A673 (cell line): ENCODE measurements at regions of chr1 and their contacts with region 1.

Region 1: DNA sequence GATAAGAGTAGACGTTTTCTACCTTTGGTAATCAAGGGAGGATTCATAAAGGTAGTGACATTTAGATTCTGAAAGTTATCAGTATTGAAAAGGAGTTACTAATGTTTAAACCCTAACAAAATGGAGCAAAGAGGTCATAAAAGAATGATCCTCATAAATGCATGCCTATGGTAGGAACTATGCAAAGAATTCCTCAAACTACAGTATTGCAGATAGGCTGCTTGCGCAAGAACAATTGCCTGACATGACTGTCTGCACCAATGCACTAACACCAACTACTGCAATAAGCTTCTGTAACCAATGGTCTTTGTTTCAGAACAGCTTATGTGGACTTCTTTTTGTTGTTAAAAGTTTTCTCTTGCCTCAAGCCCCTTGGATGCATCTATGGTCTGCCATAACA is 597.3 kb upstream of the ADGRL4 start:
- DNase-seq: peak; percentile 26
- H3K4me3 ChIP-seq: no peak overlapping the region
- H3K27ac ChIP-seq: no peak overlapping the region
- H3K4me1 ChIP-seq: peaks cover 11% of the 10 kb centered on the region
- H3K27me3 ChIP-seq: no peaks in the 10 kb centered on the region
- CTCF ChIP-seq: no peak

Region 2: GRCh38 chr1:79507770-79508169 is 96.1 kb before region 1 on chr1:
- CTCF ChIA-PET with region 1: no interaction called
- POLR2A ChIA-PET with region 1: no interaction called
- intact Hi-C with region 1: no loop called
- DNase-seq: no peak
- H3K4me3 ChIP-seq: no peak overlapping the region
- H3K27ac ChIP-seq: no peak overlapping the region
- H3K4me1 ChIP-seq: no peaks in the 10 kb centered on the region
- H3K27me3 ChIP-seq: no peaks in the 10 kb centered on the region
- CTCF ChIP-seq: no peak

Region 3: DNA sequence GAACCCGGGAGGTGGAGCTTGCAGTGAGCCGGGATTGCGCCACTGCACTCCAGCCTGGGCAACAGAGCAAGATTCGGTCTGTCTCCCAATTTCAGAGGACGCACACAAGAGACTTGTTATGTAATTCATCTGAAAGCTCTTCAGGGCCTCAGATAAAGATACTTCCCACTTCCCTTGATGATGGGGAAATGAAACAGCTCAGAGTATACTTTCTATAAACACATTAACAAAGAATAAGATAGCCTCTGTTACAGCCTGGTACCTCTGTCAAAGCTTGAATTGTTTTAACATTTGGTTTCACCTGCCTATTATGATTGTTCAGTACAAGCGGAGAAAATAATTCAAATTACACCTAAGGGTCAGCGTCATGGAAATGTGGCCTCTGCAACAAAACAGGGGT is 25.6 kb after region 1 on chr1:
- CTCF ChIA-PET with region 1: no interaction called
- POLR2A ChIA-PET with region 1: interaction called, 16 read pairs
- intact Hi-C with region 1: no loop called
- DNase-seq: no peak
- H3K4me3 ChIP-seq: no peak overlapping the region
- H3K27ac ChIP-seq: no peak overlapping the region
- H3K4me1 ChIP-seq: no peaks in the 10 kb centered on the region
- H3K27me3 ChIP-seq: no peaks in the 10 kb centered on the region
- CTCF ChIP-seq: no peak